ENCODE measurements at regions of chr11 and their contacts with region 1.

Region 1: GRCh38 chr11:64864473-64865285 is 13.7 kb downstream of the EHD1 start:
- H3K4me3 ChIP-seq: no peak overlapping the region
- H3K27ac ChIP-seq: no peak overlapping the region
- H3K4me1 ChIP-seq: no peaks in the 10 kb centered on the region
- CTCF ChIP-seq: no peak

Region 2: DNA sequence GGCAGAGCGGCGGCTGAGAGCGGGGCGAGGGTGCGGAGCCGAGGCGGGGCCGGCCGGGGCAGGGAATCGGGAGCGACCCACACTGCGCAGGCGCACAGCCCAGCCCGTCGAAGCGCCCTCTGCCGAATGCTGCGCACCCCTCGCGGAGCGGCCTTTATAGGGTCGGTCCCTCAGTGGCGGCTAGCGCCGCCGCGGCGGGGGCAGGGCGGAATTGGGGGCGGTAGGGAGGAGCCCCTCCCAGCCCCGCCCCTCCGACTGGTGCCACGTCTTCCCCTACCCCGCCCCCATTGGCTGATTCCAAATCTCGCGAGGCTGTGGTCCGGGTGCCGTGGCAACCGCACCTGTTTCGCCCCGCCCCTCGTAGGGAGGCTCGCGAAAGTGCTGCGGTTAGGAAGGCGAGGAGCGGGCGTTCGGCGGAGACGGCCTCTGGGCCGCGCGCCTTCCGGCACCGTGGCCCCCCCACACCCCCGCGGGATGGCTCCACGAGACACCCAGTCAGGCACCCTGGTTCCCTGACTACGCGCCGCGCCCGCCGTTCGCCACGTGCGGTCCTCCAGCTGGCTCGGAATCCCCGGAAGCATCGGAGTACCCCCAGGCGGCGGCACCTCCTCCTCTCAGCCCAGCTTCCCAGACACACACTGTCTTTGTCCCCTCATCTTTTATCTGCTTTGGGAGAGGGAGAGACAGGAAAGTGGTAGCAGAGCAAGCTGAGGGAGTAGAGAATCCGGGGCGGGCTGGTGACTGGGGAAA is 14.0 kb after region 1 on chr11 and contains the start of gene EHD1:
- CTCF ChIA-PET with region 1: interaction called, 13 read pairs
- POLR2A ChIA-PET with region 1: interaction called, 5 read pairs
- H3K4me3 ChIP-seq: peak within 1 kb of the TSS; percentile 85
- H3K27ac ChIP-seq: peak within 1 kb of the TSS; percentile 64; the same call in 1 of the 2 replicates
- H3K4me1 ChIP-seq: no peaks in the 10 kb centered on the region
- CTCF ChIP-seq: peak; percentile 89

Region 3: GRCh38 chr11:64887757-64888405 is 23.2 kb after region 1 on chr11:
- CTCF ChIA-PET with region 1: interaction called, 12 read pairs
- POLR2A ChIA-PET with region 1: interaction called, 3 read pairs
- H3K4me3 ChIP-seq: no peak overlapping the region
- H3K27ac ChIP-seq: no peak overlapping the region
- H3K4me1 ChIP-seq: no peaks in the 10 kb centered on the region
- CTCF ChIP-seq: peak; percentile 84